Natural killer cell (primary cell): ENCODE measurements at regions of chr12 and their contacts with region 1.

Region 1: DNA sequence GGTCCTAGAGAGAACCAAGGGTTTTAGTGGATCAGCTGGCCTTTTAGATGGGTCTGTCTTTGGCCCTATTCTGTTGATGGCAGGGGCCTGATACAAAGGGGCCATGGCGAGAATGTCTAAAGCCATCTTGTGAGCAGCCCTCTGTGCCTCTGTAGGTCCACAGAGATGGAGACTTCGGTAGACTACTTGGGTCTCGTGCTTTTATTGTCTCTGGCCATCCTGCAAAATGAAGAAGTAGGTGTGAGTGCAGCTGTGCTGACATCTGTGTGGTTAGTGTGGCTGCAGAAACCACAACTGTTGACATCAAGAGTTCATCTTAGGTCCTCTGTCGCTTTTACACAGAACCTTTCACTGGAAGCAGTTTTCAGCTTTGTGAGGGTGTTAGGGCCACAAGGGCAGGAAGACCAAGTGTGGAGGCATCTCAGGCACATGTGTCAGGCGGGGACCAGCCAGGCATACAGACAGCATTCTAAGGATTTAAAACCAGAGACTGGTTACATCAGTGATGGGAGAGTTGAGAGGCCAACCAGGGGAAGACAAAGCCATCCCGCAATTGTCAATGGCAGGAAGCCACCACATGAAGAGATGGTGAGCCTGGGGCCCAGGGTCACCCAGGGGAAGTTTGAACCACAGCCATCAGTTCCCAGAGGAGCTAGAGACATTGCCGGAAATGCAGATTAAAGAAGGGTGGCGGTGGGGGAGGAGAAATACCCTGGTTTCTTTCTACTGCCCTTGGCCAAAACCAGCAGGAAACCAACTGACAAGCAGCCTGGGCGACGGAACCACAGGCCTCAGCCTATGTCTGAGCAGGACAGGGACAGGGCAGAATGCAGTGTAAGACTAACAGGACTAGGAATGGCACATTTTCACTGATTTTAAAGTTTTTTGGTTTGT is 13.0 kb upstream of the TPCN1 start:
- DNase-seq: peak; percentile 65 to 89
- ATAC-seq: peak; percentile 84 to 92 (median 85)
- H3K4me3 ChIP-seq: no peak overlapping the region
- H3K4me3 Mint-ChIP-seq: peak overlapping the region; percentile 87
- H3K27ac ChIP-seq: peak overlapping the region; percentile 82
- H3K27ac Mint-ChIP-seq: peak overlapping the region; percentile 92 to 97
- H3K4me1 ChIP-seq: peaks cover 49% of the 10 kb centered on the region
- H3K4me1 Mint-ChIP-seq: peaks cover 34 to 43% of the 10 kb centered on the region in 2 donors
- H3K27me3 ChIP-seq: no peaks in the 10 kb centered on the region
- H3K27me3 Mint-ChIP-seq: no peaks in the 10 kb centered on the region
- CTCF ChIP-seq: no peak

Region 2: GRCh38 chr12:113184900-113185773 is 23.2 kb before region 1 on chr12 and contains the starts of genes DDX54 and RITA1:
- intact Hi-C with region 1: loop called (anchors 1 kb)
- DNase-seq: peak; percentile 85 to 94
- ATAC-seq: peak; percentile 83 to 88 (median 85)
- H3K4me3 ChIP-seq: peak within 1 kb of the TSS; percentile 89
- H3K4me3 Mint-ChIP-seq: peak within 1 kb of the TSS; percentile 96
- H3K27ac ChIP-seq: peak within 1 kb of the TSS; percentile 95
- H3K27ac Mint-ChIP-seq: peak within 1 kb of the TSS; percentile 87 to 94
- H3K4me1 ChIP-seq: peaks cover 29% of the 10 kb centered on the region
- H3K4me1 Mint-ChIP-seq: peaks cover 40 to 41% of the 10 kb centered on the region in 2 donors
- H3K27me3 ChIP-seq: no peaks in the 10 kb centered on the region
- H3K27me3 Mint-ChIP-seq: no peaks in the 10 kb centered on the region
- CTCF ChIP-seq: no peak
- total RNA-seq, gene DDX54: 84.6 to 100 (median 97.1) TPM
- total RNA-seq, gene RITA1: 7.7 to 13.8 (median 12.0) TPM